CD4-positive, alpha-beta memory T cell (primary cell): ENCODE measurements at regions of chr7 and their contacts with region 1.

Region 1: DNA sequence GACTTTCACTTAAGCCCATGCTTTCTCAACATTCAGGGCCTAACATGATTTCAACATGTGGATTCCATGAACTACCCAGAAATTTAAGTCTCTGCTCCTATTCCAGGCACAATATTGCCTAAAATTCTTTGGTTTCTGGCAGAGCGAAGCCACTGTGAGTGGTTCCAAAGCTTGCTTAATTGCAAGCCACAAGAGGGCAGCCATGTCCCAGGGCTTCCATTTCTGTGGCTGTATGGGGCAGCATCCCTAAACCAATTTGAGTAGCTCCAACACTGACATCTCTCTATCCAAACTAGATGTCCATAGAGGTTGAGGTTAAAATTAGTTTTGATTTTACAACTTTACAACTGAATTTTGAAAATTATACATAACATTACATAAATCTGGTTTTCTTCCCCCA is 56.3 kb upstream of the MDFIC start:
- DNase-seq: peak; percentile 44 to 61 (median 55)
- H3K4me3 ChIP-seq: no peak overlapping the region
- H3K4me3 Mint-ChIP-seq: no peak overlapping the region
- H3K27ac ChIP-seq: no peak overlapping the region
- H3K27ac Mint-ChIP-seq: no peak overlapping the region
- H3K4me1 ChIP-seq: no peaks in the 10 kb centered on the region
- H3K4me1 Mint-ChIP-seq: peaks cover 2 to 14% (median 8%) of the 10 kb centered on the region in 4 donors
- H3K27me3 ChIP-seq: no peaks in the 10 kb centered on the region
- H3K27me3 Mint-ChIP-seq: no peaks in the 10 kb centered on the region

Region 2: GRCh38 chr7:114916261-114916892 is 50.8 kb after region 1 on chr7:
- CTCF ChIA-PET with region 1: interaction called, 19 read pairs
- POLR2A ChIA-PET with region 1: interaction called, 4 read pairs
- intact Hi-C with region 1: loop called (anchors 5 kb)
- DNase-seq: peak in 3 of 5 donors; percentile 22 to 36 (median 24)
- H3K4me3 ChIP-seq: no peak overlapping the region
- H3K4me3 Mint-ChIP-seq: peak overlapping the region; percentile 67 to 92 (median 84)
- H3K27ac ChIP-seq: peak overlapping the region; percentile 31
- H3K27ac Mint-ChIP-seq: peak overlapping the region; percentile 86 to 98 (median 95)
- H3K4me1 ChIP-seq: peaks cover 43% of the 10 kb centered on the region
- H3K4me1 Mint-ChIP-seq: peaks cover 38 to 53% (median 47%) of the 10 kb centered on the region in 4 donors
- H3K27me3 ChIP-seq: no peaks in the 10 kb centered on the region
- H3K27me3 Mint-ChIP-seq: no peaks in the 10 kb centered on the region

Region 3: GRCh38 chr7:114944745-114945625 is 79.4 kb after region 1 on chr7:
- CTCF ChIA-PET with region 1: interaction called, 138 read pairs
- POLR2A ChIA-PET with region 1: interaction called, 5 read pairs
- intact Hi-C with region 1: no loop called
- DNase-seq: no peak
- H3K4me3 ChIP-seq: no peak overlapping the region
- H3K4me3 Mint-ChIP-seq: peak overlapping the region in 1 of 8 donors; percentile 27
- H3K27ac ChIP-seq: no peak overlapping the region
- H3K27ac Mint-ChIP-seq: peak overlapping the region in 5 of 7 donors; percentile 16 to 83 (median 36)
- H3K4me1 ChIP-seq: peaks cover 75% of the 10 kb centered on the region
- H3K4me1 Mint-ChIP-seq: peaks cover 72 to 94% (median 83%) of the 10 kb centered on the region in 4 donors
- H3K27me3 ChIP-seq: no peaks in the 10 kb centered on the region
- H3K27me3 Mint-ChIP-seq: no peaks in the 10 kb centered on the region

Region 4: DNA sequence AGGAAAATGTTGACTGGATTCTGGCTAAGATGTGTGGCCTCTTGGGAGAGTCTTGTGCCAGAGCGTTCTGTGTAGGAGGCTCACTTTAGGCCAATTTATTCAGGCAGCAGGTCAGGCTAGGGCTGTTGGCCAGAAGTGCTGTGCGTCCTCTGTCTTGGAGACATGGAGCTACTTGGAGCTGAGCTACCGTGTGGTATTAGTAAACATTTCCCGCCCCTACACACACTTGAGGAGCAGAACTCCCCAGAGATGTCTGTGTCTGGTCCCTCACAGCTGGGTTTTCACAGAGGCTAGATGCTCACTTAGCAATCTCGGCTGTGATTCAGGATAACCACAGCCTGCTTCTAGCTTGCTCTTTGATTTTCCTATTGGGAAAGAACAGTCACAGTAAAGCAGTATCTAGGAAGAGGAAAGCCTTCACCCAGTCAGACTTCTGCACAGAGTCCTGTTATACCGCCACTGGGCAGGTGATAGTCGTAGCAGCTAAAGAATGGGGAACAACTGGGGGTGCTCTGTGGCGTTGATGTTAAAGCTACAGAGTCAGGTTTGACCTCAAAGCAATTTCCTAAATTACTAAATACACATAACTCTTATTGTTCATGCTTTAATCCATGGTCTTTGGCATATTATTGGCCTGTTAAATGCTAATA is 143.0 kb after region 1 on chr7:
- CTCF ChIA-PET with region 1: interaction called, 15 read pairs
- POLR2A ChIA-PET with region 1: no interaction called
- intact Hi-C with region 1: loop called (anchors 5 kb)
- DNase-seq: peak in 2 of 5 donors; percentile 20 to 41
- H3K4me3 ChIP-seq: peak overlapping the region; percentile 17 to 25
- H3K4me3 Mint-ChIP-seq: peak overlapping the region; percentile 45 to 92 (median 80)
- H3K27ac ChIP-seq: peak overlapping the region; percentile 55
- H3K27ac Mint-ChIP-seq: peak overlapping the region; percentile 86 to 96 (median 93)
- H3K4me1 ChIP-seq: peaks cover 89% of the 10 kb centered on the region
- H3K4me1 Mint-ChIP-seq: peaks cover 74 to 95% (median 80%) of the 10 kb centered on the region in 4 donors
- H3K27me3 ChIP-seq: no peaks in the 10 kb centered on the region
- H3K27me3 Mint-ChIP-seq: no peaks in the 10 kb centered on the region

Region 5: DNA sequence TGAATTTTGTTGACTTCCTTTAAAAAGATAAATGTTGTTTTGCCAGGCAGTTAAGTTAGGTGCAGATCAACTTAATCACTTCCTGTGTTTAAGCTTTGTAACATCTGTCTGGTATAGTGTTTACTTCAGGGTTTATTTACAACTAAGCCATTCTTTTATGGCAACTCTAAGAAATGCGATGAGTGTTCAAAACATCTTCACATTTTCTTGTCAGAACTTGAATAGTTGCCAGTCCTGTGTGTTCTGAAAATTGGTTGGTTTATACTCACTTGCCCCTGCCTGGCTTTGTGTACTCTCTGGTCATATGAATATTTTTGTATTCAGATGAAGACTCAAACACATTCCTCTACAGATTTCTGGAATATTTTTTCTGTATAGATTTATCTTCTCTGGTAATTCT is 383.5 kb after region 1 on chr7:
- CTCF ChIA-PET with region 1: no interaction called
- POLR2A ChIA-PET with region 1: no interaction called
- intact Hi-C with region 1: no loop called
- DNase-seq: no peak
- H3K4me3 ChIP-seq: no peak overlapping the region
- H3K4me3 Mint-ChIP-seq: no peak overlapping the region
- H3K27ac ChIP-seq: no peak overlapping the region
- H3K27ac Mint-ChIP-seq: no peak overlapping the region
- H3K4me1 ChIP-seq: no peaks in the 10 kb centered on the region
- H3K4me1 Mint-ChIP-seq: peaks cover 0 to 7% (median 5%) of the 10 kb centered on the region in 4 donors
- H3K27me3 ChIP-seq: no peaks in the 10 kb centered on the region
- H3K27me3 Mint-ChIP-seq: peaks cover 1 to 4% of the 10 kb centered on the region in 2 donors

Region 6: DNA sequence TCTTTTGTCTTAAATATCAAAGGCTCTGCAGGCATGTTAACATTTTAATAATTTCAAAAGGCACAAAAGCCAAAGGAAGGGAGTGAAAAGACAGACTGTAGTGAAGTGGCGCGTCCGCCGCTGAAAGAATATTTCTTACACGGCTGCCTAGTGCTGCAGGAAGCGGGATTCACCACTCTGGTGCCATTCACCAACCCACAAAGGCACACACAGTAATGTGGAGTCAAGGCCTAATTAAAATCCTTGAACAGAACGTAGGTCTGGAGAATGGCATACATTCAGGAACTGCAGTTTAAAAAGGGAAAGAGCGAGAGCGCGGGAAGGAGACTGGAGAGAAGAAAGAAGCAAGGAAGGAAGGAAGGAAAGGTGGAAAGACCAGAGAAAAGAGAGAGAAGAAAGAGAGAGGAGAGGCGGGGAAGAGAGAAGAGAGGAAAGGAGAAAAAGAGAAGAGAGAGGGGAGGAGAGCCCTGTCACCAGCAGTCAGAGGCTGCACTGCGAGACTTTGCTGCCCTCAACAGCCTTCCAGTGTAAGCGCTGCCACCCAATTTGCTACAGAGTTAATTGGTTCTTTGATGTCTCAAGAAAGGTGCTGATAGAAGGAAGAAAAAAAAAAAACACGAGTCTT is 610.3 kb after region 1 on chr7:
- CTCF ChIA-PET with region 1: interaction called, 6 read pairs
- POLR2A ChIA-PET with region 1: no interaction called
- intact Hi-C with region 1: loop called (anchors 1 kb)
- DNase-seq: peak in 4 of 5 donors; percentile 15 to 35 (median 24)
- H3K4me3 ChIP-seq: no peak overlapping the region
- H3K4me3 Mint-ChIP-seq: peak overlapping the region; percentile 22 to 87 (median 63)
- H3K27ac ChIP-seq: no peak overlapping the region
- H3K27ac Mint-ChIP-seq: peak overlapping the region in 1 of 7 donors; percentile 8
- H3K4me1 ChIP-seq: peaks cover 14% of the 10 kb centered on the region
- H3K4me1 Mint-ChIP-seq: peaks cover 8 to 22% (median 10%) of the 10 kb centered on the region in 4 donors
- H3K27me3 ChIP-seq: no peaks in the 10 kb centered on the region
- H3K27me3 Mint-ChIP-seq: peaks cover 20 to 21% of the 10 kb centered on the region in 2 donors

Region 7: DNA sequence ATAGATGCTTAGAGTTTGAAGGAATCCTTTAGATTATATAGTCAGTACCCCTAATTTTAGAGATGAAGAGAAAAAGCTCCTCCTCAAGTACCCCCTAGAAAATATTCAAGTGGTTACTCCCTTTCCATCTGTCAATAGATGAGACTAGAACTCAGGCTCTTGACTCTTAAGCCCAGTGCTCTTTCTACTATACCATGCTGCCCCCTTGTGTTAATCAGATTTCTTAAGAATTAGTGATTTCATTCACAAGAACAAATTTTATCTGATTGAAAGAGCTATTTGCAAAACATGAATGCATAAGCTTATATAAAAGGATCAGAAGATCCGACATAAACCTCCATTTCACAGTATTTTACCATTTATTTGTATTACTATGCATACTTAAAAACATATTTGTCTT is 985.7 kb after region 1 on chr7:
- CTCF ChIA-PET with region 1: interaction called, 16 read pairs
- POLR2A ChIA-PET with region 1: no interaction called
- intact Hi-C with region 1: no loop called
- DNase-seq: peak in 4 of 5 donors; percentile 18 to 31 (median 28)
- H3K4me3 ChIP-seq: no peak overlapping the region
- H3K4me3 Mint-ChIP-seq: no peak overlapping the region
- H3K27ac ChIP-seq: no peak overlapping the region
- H3K27ac Mint-ChIP-seq: no peak overlapping the region
- H3K4me1 ChIP-seq: no peaks in the 10 kb centered on the region
- H3K4me1 Mint-ChIP-seq: peaks cover 0 to 2% (median 0%) of the 10 kb centered on the region in 4 donors
- H3K27me3 ChIP-seq: no peaks in the 10 kb centered on the region
- H3K27me3 Mint-ChIP-seq: peaks cover 2 to 6% of the 10 kb centered on the region in 2 donors